GM12878 (cell line): ENCODE measurements at regions of chr18 and their contacts with region 1.

Region 1: GRCh38 chr18:62186774-62187542 is at the starts of genes PIGN and RELCH:
- DNase-seq: peak; percentile 92
- ATAC-seq: peak; percentile 90
- H3K4me3 ChIP-seq: peak within 1 kb of the TSS; percentile 99
- H3K27ac ChIP-seq: peak within 1 kb of the TSS; percentile 91
- H3K4me1 ChIP-seq: peaks cover 3% of the 10 kb centered on the region
- H3K27me3 ChIP-seq: no peaks in the 10 kb centered on the region
- CTCF ChIP-seq: no peak
- EP300 ChIP-seq: no peak
- POLR2A ChIP-seq: peak; percentile 98
- RAD21 ChIP-seq: no peak
- polyA plus RNA-seq, gene PIGN: 6.9 to 12.3 TPM
- polyA plus RNA-seq, gene RELCH: 3.1 to 3.4 TPM

Region 2: GRCh38 chr18:62198259-62198658 is 11.3 kb after region 1 on chr18:
- CTCF ChIA-PET with region 1: interaction called, 19 read pairs
- POLR2A ChIA-PET with region 1: interaction called, 8 read pairs
- RAD21 ChIA-PET with region 1: interaction called, 3 read pairs
- SMC1A ChIA-PET with region 1: interaction called, 11 read pairs
- in situ Hi-C with region 1: no loop called
- intact Hi-C with region 1: no loop called
- DNase-seq: no peak
- ATAC-seq: peak; percentile 59
- H3K4me3 ChIP-seq: no peak overlapping the region
- H3K27ac ChIP-seq: no peak overlapping the region
- H3K4me1 ChIP-seq: no peaks in the 10 kb centered on the region
- H3K27me3 ChIP-seq: no peaks in the 10 kb centered on the region
- CTCF ChIP-seq: no peak
- EP300 ChIP-seq: no peak
- POLR2A ChIP-seq: no peak
- RAD21 ChIP-seq: no peak

Region 3: DNA sequence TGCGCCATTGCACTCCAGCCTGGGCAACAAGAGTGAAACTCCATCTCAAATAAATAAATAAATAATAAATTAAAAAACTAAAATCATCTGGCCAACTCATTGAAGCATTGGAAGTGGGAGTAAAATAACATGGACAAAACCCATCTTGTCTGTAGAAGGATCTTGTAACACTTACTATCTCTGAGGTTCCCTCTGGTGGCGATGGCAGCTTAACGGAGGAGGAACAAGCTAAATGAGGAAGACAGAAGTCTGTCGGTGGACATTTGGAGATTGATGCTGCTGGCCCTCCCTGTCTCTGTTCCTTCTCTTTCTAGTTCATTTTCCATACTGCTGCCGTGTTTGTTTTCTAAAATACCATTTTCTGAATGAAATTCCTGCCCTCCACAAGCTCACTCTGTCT is 379.2 kb after region 1 on chr18:
- CTCF ChIA-PET with region 1: no interaction called
- POLR2A ChIA-PET with region 1: no interaction called
- RAD21 ChIA-PET with region 1: no interaction called
- SMC1A ChIA-PET with region 1: no interaction called
- in situ Hi-C with region 1: no loop called
- intact Hi-C with region 1: no loop called
- DNase-seq: no peak
- ATAC-seq: no peak
- H3K4me3 ChIP-seq: no peak overlapping the region
- H3K27ac ChIP-seq: no peak overlapping the region
- H3K4me1 ChIP-seq: no peaks in the 10 kb centered on the region
- H3K27me3 ChIP-seq: no peaks in the 10 kb centered on the region
- CTCF ChIP-seq: peak in 2 of 3 experiments; percentile 5 to 20; a peak in 2 of 6 replicates
- EP300 ChIP-seq: no peak
- POLR2A ChIP-seq: no peak
- RAD21 ChIP-seq: no peak